ENCODE measurements at regions of chr12 and their contacts with region 1.

Region 1: DNA sequence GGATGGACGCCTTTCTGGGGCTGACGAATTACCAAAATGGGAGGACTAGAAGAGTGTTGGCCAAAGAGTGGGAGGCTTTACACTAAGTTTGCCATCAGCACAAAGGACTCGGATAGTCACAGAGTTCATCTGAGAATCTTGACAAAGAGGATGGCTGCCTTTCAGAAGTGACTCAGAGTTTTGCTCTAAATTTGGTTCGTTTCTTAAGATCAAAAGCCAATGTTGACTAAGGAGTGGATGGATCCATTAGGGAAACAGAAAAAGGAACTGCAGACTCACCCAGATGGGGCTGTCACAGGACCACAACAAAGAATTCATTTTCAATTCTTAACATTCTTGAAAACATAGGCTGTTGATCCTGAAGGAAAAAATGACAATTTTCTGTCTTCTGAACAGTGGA is 81.3 kb upstream of the DUSP6 start:
- DNase-seq: peak in 2 of 3 donors; percentile 42 to 51
- H3K4me3 ChIP-seq: no peak overlapping the region
- H3K4me3 Mint-ChIP-seq: no peak overlapping the region
- H3K27ac ChIP-seq: no peak overlapping the region
- H3K27ac Mint-ChIP-seq: peak overlapping the region in 5 of 7 donors; percentile 13 to 67 (median 39)
- H3K4me1 ChIP-seq: peaks cover 14 to 16% of the 10 kb centered on the region in 2 donors
- H3K4me1 Mint-ChIP-seq: peaks cover 32% of the 10 kb centered on the region
- H3K27me3 ChIP-seq: no peaks in the 10 kb centered on the region
- H3K27me3 Mint-ChIP-seq: no peaks in the 10 kb centered on the region
- CTCF ChIP-seq: no peak

Region 2: DNA sequence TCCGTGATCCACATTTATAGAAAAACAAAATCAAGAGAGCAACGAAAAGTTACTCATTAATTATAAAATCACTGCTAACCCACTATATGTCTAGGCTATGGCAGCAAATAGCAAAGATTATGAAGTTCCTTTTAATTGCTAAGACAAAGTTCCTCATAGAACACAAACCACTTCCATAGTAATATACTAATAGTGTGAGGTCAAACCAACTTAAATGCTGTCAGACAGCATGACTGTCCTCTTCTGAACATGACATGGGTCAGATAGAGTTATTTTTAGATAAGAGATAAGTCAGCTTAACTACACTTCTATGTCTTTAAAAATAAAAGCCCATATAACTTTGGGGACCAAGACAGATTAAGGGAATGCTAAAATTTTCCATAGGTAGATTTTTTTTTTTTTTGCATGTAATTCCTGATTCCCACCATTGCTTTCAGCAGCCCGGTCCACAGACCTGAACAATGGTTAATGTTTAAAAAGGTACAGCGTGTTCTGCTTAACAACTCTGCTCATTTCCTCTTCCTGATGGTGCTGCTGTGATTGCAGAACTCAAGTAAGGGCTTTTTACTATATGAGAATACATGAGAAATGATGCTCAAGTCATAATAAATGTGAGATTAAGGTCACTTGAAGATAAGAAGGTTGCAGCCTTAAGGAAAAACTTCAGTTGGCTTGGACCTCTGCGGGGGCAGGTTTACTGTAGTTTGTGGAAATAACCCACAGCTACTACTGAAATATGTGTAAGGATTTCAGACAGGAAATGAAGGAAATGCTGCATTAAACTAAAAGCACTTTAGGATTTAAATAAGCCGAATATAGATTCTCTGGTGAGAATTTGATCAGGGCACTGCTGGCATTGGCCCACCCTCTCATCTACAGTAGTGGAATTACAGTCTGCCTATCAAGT is 43.6 kb before region 1 on chr12:
- intact Hi-C with region 1: loop called in 1 of 2 experiments (anchors 5 kb)
- DNase-seq: peak; percentile 40 to 53 (median 44)
- H3K4me3 ChIP-seq: peak overlapping the region in 1 of 3 experiments; percentile 10
- H3K4me3 Mint-ChIP-seq: peak overlapping the region in 1 of 2 donors; percentile 22
- H3K27ac ChIP-seq: peak overlapping the region in 1 of 2 donors; percentile 65
- H3K27ac Mint-ChIP-seq: peak overlapping the region; percentile 43 to 92 (median 86)
- H3K4me1 ChIP-seq: peaks cover 54 to 56% of the 10 kb centered on the region in 2 donors
- H3K4me1 Mint-ChIP-seq: peaks cover 51% of the 10 kb centered on the region
- H3K27me3 ChIP-seq: no peaks in the 10 kb centered on the region
- H3K27me3 Mint-ChIP-seq: peaks cover 0 to 6% (median 2%) of the 10 kb centered on the region in 3 donors
- CTCF ChIP-seq: no peak

Region 3: GRCh38 chr12:89451841-89452251 is 18.2 kb after region 1 on chr12:
- intact Hi-C with region 1: no loop called
- DNase-seq: no peak
- H3K4me3 ChIP-seq: no peak overlapping the region
- H3K4me3 Mint-ChIP-seq: no peak overlapping the region
- H3K27ac ChIP-seq: no peak overlapping the region
- H3K27ac Mint-ChIP-seq: peak overlapping the region in 4 of 7 donors; percentile 19 to 76 (median 41)
- H3K4me1 ChIP-seq: peaks cover 12 to 13% of the 10 kb centered on the region in 2 donors
- H3K4me1 Mint-ChIP-seq: peaks cover 17% of the 10 kb centered on the region
- H3K27me3 ChIP-seq: no peaks in the 10 kb centered on the region
- H3K27me3 Mint-ChIP-seq: peaks cover 0 to 2% (median 1%) of the 10 kb centered on the region in 3 donors
- CTCF ChIP-seq: no peak

Region 4: DNA sequence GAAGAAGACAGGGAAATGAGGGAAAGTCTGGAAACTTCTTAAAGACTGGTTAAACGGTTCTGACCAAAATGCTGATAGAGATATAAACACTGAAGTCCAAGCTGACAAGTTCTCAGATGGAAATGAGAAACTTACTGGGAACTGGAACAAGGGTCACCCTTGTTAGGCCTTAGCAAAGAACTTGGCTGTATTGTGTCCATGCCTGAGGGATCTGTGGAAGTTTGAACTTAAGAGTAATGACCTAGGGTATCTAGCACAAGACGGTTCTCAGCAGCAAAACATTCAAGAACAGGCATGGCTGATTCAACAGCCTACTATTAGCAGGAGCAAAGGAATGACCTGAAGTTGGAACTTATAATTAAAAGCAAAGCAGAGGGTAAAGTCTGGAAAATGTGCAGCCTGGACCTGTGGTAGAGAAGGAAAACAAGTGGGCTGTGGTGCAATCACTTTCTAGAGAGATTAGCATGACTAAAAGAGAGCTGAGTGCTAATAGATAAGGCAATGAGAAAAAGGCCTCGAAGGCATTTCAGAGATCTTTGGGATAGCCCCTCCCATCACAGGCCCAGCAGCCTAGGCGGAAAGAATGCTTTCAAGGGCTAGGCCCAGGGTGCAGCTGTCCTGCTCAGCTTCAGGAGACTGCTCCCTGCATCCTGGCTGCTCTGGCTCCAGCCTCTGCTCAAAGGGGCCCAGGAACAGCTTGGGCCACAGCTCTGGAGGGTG is 214.7 kb after region 1 on chr12:
- intact Hi-C with region 1: no loop called
- DNase-seq: no peak
- H3K4me3 ChIP-seq: no peak overlapping the region
- H3K4me3 Mint-ChIP-seq: no peak overlapping the region
- H3K27ac ChIP-seq: no peak overlapping the region
- H3K27ac Mint-ChIP-seq: peak overlapping the region in 5 of 7 donors; percentile 5 to 70 (median 35)
- H3K4me1 ChIP-seq: no peaks in the 10 kb centered on the region
- H3K4me1 Mint-ChIP-seq: no peaks in the 10 kb centered on the region
- H3K27me3 ChIP-seq: no peaks in the 10 kb centered on the region
- H3K27me3 Mint-ChIP-seq: no peaks in the 10 kb centered on the region
- CTCF ChIP-seq: no peak